Aorta (tissue), 5 donors: ENCODE measurements at regions of chr17 and their contacts with region 1.

Region 1: GRCh38 chr17:19433727-19434340 is 22.8 kb downstream of the RNF112 start:
- DNase-seq: no peak
- ATAC-seq: no peak
- H3K4me3 ChIP-seq: no peak overlapping the region
- H3K27ac ChIP-seq: no peak overlapping the region
- H3K4me1 ChIP-seq: no peaks in the 10 kb centered on the region
- H3K27me3 ChIP-seq: no peaks in the 10 kb centered on the region

Region 2: GRCh38 chr17:19398301-19399181 is 35.3 kb before region 1 on chr17:
- intact Hi-C with region 1: loop called in 1 of 2 experiments (anchors 5 kb)
- DNase-seq: peak; percentile 73 to 81
- ATAC-seq: peak; percentile 75
- H3K4me3 ChIP-seq: no peak overlapping the region
- H3K27ac ChIP-seq: peak overlapping the region; percentile 62 to 64
- H3K4me1 ChIP-seq: no peaks in the 10 kb centered on the region
- H3K27me3 ChIP-seq: no peaks in the 10 kb centered on the region